Lower leg skin (tissue), 4 donors: ENCODE measurements at regions of chr9 and their contacts with region 1.

Region 1: GRCh38 chr9:134399435-134400056 is 73.3 kb downstream of the RXRA start:
- DNase-seq: no peak
- H3K4me3 ChIP-seq: no peak overlapping the region
- CTCF ChIP-seq: no peak
- POLR2A ChIP-seq: no peak

Region 2: DNA sequence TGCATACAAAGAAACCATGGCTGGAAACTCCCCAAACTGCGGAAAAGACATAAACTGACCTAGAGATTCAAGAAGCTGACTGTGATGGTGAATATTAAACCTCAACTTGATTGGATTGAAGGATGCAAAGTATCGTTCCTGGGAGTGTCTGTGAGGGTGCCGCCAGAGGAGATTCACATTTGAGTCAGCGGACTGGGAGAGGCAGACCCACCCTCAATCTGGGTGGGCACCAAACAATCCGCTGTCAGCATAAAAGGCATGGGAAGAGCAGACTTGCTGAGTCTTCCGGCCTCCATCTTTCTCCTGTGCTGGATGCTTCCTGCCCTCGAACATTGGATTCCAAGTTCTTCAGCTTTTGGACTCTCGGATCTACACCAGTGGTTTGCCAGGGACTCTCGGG is 288.5 kb before region 1 on chr9:
- intact Hi-C with region 1: no loop called
- DNase-seq: no peak
- H3K4me3 ChIP-seq: no peak overlapping the region
- CTCF ChIP-seq: no peak
- POLR2A ChIP-seq: no peak

Region 3: GRCh38 chr9:134339183-134339806 is 60.3 kb before region 1 on chr9:
- intact Hi-C with region 1: loop called (anchors 10 kb)
- DNase-seq: no peak
- H3K4me3 ChIP-seq: no peak overlapping the region
- CTCF ChIP-seq: no peak
- POLR2A ChIP-seq: no peak